Posterior vena cava (tissue), 2 donors: ENCODE measurements at regions of chr17 and their contacts with region 1.

Region 1: DNA sequence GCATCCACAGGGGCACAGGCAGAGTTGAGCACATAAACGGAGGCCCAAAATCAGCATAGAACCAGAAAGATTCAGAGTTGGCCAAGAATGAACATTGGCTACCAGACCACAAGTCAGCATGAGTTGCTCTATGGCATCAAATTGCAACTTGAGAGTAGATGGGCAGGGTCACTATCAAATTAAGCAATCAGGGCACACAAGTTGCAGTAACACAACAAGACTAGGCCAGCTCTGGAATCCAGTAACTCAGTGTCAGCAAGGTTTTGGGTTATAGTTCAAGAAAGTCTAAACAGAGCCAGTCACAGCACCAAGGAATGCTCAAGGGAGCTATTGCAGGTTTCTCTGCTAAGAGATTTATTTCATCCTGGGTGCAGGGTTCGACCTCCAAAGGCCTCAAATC is 12.9 kb downstream of the G6PC1 start:
- DNase-seq: no peak

Region 2: DNA sequence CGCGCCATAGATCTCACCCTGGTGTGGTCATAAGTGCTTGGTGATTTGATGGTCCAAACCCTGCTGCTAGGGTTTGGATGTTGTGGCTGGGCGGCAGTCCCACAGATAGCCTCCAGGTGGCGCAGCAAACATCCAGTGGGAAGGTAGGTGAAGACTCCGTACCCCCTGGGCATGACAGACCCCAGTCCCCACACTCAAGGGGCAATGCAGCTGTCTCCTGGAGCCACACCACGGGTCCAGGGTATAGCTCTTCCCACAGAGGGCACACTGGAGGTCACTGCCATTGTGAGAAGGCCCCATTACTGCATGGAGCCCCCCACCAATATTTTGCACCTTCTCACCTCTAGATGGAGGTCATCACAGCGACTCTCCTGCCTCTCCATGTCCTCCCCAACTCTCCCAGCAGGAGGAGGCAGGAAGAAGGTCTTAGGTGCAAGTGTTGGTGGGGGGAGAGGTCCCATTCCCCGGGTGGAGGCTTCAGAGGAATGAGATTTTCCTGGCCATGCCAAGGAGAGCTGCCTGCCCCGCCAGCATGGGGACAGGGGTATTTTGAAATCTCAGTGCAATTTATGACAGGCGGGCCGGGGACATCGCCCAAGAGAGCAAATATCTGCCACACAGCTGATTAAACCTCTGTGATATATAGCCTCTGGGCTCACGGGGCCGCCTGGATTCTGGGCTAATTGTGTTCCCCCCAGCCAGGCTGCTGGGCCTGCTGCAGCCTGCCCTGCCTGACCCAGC is 846.0 kb before region 1 on chr17:
- intact Hi-C with region 1: loop called in 1 of 2 experiments (anchors 5 kb)
- DNase-seq: peak; percentile 88

Region 3: GRCh38 chr17:42928714-42929496 is 15.4 kb after region 1 on chr17:
- intact Hi-C with region 1: no loop called
- DNase-seq: peak; percentile 72

Region 4: GRCh38 chr17:42964161-42964932 is 50.8 kb after region 1 on chr17 and contains the start of gene AARSD1:
- intact Hi-C with region 1: no loop called
- DNase-seq: peak; percentile 97
- total RNA-seq, gene AARSD1: 22.7 to 34.2 TPM

Region 5: DNA sequence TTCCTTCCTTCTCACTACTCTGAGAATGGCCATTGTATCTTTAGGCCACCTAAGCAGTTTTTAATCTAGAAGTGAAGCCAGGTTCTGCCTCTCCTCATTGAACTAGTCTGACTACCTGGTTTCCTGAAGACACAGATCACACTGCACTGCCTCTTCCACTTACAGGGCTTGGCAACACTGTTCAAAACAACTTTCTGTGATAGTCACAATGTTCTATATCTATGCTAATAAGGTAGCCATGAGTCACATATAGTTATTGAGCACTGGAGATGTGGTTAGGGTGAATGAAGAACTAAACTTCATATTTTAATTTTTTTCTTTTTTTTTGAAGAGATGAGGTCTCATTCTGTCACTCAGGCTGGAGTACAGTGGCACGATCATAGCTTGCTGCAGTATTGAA is 138.4 kb after region 1 on chr17:
- intact Hi-C with region 1: no loop called
- DNase-seq: no peak